GM10248 (cell line): ENCODE measurements at regions of chr19 and their contacts with region 1.

Region 1: DNA sequence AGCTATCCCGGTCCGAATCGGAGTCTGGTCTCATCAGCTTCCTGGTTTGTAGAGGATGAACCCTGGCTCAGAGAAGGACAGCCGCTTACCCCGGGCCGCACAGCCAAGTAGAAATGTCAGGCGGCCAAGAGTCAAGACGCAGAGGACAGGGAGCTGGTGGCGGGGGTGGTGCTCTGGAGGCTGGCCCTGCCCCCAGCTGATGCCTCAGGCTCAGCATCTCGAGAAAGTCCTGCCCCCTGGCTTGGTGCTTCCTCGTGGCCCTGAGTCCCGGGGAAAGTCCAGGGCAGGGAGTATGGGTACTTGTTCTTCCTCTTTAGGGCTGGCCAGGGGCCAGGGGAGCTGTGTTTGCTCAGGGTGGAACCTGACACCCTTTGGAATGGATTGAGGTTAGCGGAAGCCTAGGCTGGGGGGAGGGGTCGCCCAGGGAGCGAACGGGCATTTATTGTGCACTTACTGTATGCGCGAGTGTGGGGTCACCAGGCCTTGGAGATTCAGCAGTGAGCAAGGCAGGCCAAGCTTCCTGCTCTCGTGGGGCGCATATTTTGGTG is 2.2 kb downstream of the TJP3 start:
- DNase-seq: no peak
- CTCF ChIP-seq: no peak

Region 2: DNA sequence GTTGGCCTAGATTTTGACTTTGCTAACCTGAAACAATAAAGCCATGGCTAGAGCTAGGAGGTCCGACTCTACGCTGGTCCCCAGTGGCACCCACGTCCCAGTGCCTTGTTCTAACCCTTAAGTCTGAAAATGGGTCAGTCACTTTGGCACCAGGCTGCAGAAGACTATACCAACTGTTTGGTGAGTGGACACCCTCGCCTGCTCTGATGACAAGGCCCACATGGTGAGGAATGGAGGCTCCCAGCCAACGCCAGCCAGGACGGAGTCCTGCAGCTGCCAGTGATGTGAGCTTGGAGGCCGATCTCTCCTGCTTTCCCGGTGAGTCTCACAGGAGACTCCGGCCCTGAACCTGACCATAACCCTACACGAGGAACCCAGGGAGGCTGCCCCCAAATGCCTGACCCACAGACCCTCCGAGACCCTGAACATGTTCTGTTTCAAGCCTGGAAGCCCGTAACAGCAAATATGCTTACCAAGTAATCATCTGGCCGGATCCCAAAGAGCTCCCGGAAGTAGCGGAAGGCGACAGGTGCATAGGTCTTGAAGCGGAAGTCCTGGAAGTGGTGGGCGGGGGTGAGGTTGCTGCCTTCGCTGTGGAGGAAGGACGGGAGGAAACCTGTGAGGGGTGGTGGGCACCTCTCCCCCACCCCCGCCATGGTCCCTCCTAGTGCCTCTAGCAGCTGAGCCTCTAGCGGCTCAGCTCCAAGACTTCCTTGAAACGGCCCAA is 49.7 kb before region 1 on chr19:
- CTCF ChIA-PET with region 1: interaction called, 148 read pairs
- POLR2A ChIA-PET with region 1: no interaction called
- DNase-seq: no peak
- CTCF ChIP-seq: no peak